PC-9 (cell line): ENCODE measurements at regions of chr11 and their contacts with region 1.

Region 1: GRCh38 chr11:44519989-44520737 is 45.3 kb upstream of the CD82 start:
- DNase-seq: no peak
- H3K4me3 ChIP-seq: no peak overlapping the region
- H3K27ac ChIP-seq: no peak overlapping the region
- H3K4me1 ChIP-seq: no peaks in the 10 kb centered on the region
- H3K27me3 ChIP-seq: peaks cover 34% of the 10 kb centered on the region
- CTCF ChIP-seq: no peak

Region 2: DNA sequence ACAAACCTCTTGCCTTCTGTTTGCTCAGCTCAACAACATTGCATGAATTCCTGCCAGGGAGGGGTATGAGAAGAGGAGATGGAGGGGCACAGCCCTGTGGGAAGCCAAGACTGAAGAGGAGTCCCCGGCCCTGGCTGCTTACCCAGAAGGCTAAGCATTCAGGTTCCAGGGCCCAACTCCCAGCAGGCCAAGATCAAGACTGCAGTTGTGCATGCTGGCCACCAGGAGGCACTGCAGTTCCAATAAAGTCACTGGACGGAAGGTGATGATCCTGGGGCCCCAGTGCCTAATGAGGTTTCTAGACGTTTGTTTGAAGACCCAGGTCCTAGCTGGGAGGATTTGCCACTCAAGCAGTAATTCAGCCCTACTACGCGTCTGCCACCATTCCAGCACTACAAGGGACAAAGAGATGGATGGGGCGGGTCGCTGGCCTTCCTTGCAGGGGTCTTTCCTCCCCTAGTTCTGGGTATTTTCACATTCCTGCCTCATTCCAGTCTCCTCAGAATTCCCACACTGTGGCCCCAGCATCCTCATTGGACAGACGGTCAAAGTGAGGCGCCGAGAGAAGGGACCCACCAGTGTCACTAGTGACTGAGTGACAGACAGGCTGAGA is 233.8 kb before region 1 on chr11:
- CTCF ChIA-PET with region 1: no interaction called
- POLR2A ChIA-PET with region 1: no interaction called
- intact Hi-C with region 1: no loop called
- DNase-seq: peak; percentile 39 to 44
- H3K4me3 ChIP-seq: no peak overlapping the region
- H3K27ac ChIP-seq: no peak overlapping the region
- H3K4me1 ChIP-seq: no peaks in the 10 kb centered on the region
- H3K27me3 ChIP-seq: peaks cover 26% of the 10 kb centered on the region
- CTCF ChIP-seq: peak; percentile 100

Region 3: DNA sequence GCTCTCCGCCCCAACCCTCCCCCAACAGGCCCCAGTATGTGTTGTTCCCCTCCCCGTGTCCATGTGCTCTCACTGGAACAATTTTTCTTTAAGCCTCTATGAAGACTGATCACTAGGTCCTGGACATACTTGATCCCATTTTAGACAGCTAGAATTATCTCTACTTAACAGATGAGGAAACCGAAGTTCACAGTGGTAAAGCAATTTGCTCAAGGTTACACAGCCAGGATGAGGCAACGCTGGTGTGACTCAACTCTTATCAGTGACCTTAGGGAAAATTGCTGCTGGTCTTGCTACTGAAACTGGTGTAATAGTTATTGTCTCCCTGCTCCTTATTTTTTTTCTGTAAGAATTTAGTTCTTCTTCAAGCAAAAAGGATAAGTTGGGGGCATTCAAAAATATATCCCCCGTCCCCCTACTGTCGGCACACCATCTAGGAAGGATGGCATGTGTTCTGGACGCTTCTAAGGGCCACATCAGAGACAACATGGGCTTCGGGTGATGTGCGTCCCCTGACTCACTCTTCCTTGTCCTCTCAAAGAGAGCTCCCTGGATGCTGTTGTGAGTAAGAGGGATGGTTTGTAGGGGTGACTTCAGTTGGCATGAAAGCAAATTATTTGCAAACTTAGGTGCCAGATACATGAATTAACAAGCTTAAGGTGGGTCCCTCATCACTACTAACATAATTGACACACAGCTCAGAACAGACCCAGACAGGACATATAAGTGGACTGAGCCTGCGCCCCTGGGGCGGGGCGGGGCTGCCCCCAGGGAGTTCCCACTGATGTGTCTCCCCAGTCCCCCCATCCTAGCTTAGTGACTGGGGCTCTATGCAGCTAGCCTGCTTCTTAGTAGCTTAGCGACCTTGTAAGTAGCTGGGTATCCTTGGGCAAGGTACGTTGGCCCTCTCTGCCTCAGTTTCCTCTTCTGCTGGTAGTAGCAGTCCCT is 186.6 kb before region 1 on chr11:
- CTCF ChIA-PET with region 1: no interaction called
- POLR2A ChIA-PET with region 1: no interaction called
- intact Hi-C with region 1: no loop called
- DNase-seq: peak in 1 of 2 experiments; percentile 42
- H3K4me3 ChIP-seq: no peak overlapping the region
- H3K27ac ChIP-seq: no peak overlapping the region
- H3K4me1 ChIP-seq: peaks cover 9% of the 10 kb centered on the region; the same call in 1 of the 2 replicates
- H3K27me3 ChIP-seq: peaks cover 57% of the 10 kb centered on the region
- CTCF ChIP-seq: no peak

Region 4: DNA sequence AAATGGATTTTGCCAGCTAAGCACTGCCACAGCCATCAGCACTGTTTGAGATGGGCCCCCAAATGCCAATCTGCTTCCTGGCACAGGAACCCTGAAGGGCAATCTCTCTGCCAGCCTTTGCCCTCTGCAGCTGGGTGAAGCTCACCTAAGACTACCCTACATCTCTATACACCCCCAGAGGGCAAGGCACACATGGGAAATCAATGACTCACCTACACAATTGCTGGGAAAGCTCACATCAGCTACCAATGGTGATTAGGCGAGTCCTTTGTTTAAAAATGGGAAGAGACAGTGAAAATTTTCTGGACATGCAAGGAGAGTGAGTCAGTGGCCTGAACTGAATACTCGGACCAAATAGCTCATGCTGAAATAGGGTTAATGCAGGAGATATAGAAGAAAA is 613.7 kb after region 1 on chr11:
- CTCF ChIA-PET with region 1: interaction called, 21 read pairs
- POLR2A ChIA-PET with region 1: no interaction called
- intact Hi-C with region 1: no loop called
- DNase-seq: no peak
- H3K4me3 ChIP-seq: no peak overlapping the region
- H3K27ac ChIP-seq: no peak overlapping the region
- H3K4me1 ChIP-seq: no peaks in the 10 kb centered on the region; the same call in 1 of the 2 replicates
- H3K27me3 ChIP-seq: peaks cover 25% of the 10 kb centered on the region
- CTCF ChIP-seq: no peak